WTC11 (cell line): ENCODE measurements at regions of chr19 and their contacts with region 1.

Region 1: DNA sequence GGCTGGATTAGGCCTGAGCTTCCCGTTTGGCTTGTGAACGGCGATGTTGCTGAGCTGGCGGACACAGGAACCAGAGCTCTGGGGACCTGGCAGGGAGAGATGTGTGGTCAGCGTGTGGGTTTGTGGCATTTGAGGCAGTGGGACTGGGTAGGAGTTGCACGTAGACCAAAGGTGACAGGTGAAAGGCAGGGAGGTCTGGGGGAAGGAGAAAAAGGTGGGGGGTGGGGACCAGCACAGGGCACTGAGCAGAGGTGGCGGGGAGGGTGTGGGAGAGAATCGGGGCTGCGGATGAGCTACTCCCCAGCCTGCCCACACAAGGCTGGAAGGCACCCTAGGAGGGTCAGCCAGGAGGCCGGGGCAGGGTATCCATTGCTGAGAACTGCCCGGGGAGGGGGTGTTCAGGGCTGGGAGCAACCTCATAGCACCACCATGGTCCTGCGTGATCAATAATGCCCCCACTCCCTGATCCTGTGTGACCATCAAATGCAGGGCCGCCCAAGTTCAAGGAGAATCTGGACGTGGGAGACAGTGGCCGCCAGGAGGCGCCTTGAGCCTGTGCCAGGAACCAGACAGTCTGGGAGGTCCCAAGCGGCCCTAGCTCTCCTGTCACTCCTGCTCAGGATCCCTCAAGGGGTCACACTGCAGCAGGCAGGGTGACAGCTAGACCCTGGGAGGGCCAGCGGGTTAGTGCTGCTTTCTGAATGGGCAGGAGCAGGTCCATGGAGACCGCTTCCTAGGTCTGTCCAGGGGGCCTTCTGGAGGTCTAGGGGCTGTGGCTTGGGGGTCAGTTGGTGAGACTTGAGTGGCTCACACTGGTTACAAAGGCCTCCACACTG is 12.8 kb upstream of the SELENOW start:
- DNase-seq: peak; percentile 88
- ATAC-seq: peak; percentile 79
- H3K4me3 Mint-ChIP-seq: no peak overlapping the region
- H3K27ac Mint-ChIP-seq: peak overlapping the region; percentile 85
- H3K4me1 Mint-ChIP-seq: peaks cover 22% of the 10 kb centered on the region
- H3K27me3 Mint-ChIP-seq: no peaks in the 10 kb centered on the region
- CTCF ChIP-seq: peak; percentile 80

Region 2: GRCh38 chr19:47398707-47399597 is 366.8 kb before region 1 on chr19:
- CTCF ChIA-PET with region 1: no interaction called
- POLR2A ChIA-PET with region 1: no interaction called
- DNase-seq: peak; percentile 33
- ATAC-seq: peak; percentile 77
- H3K4me3 Mint-ChIP-seq: peak overlapping the region; percentile 13
- H3K27ac Mint-ChIP-seq: peak overlapping the region; percentile 96
- H3K4me1 Mint-ChIP-seq: peaks cover 28% of the 10 kb centered on the region
- H3K27me3 Mint-ChIP-seq: peaks cover under 1% of the 10 kb centered on the region; the same call in 1 of the 2 replicates
- CTCF ChIP-seq: no peak

Region 3: DNA sequence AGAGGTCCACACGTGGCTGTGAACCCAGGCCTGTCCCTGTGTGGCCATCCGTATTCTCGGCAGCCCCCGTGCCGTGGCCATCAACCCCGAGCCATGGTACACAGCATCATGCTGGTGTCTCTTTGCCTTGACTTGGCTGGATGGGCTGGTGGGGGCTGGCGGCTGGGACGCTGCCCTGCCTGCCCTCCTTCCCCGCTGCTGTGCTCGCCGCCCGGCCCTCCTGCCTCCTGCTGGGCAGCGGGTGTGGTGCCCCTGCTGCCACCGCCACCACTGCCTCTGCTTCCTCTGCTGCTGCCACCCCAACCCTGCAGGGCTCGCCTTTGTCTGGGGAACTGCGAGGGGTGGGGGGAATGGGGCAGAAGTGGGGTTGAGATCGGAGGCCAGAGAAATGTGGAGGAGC is 72.2 kb before region 1 on chr19:
- CTCF ChIA-PET with region 1: no interaction called
- POLR2A ChIA-PET with region 1: no interaction called
- DNase-seq: no peak
- ATAC-seq: no peak
- H3K4me3 Mint-ChIP-seq: no peak overlapping the region
- H3K27ac Mint-ChIP-seq: no peak overlapping the region
- H3K4me1 Mint-ChIP-seq: 0 out of 2 replicates have a peak, but pooled peaks cover 2% of the 10 kb centered on the region
- H3K27me3 Mint-ChIP-seq: no peaks in the 10 kb centered on the region
- CTCF ChIP-seq: no peak

Region 4: GRCh38 chr19:47729992-47730889 is 35.5 kb before region 1 on chr19:
- CTCF ChIA-PET with region 1: interaction called, 10 read pairs
- POLR2A ChIA-PET with region 1: no interaction called
- DNase-seq: peak; percentile 95
- ATAC-seq: peak; percentile 94
- H3K4me3 Mint-ChIP-seq: peak overlapping the region; percentile 91
- H3K27ac Mint-ChIP-seq: peak overlapping the region; percentile 74; the same call in 1 of the 2 replicates
- H3K4me1 Mint-ChIP-seq: peaks cover 13% of the 10 kb centered on the region
- H3K27me3 Mint-ChIP-seq: no peaks in the 10 kb centered on the region; the same call in 1 of the 2 replicates
- CTCF ChIP-seq: no peak

Region 5: GRCh38 chr19:47745010-47745901 is 20.5 kb before region 1 on chr19 and contains the start of gene NOP53:
- CTCF ChIA-PET with region 1: interaction called, 20 read pairs
- POLR2A ChIA-PET with region 1: interaction called, 3 read pairs
- DNase-seq: peak; percentile 95
- ATAC-seq: peak; percentile 69
- H3K4me3 Mint-ChIP-seq: peak within 1 kb of the TSS; percentile 97
- H3K27ac Mint-ChIP-seq: peak within 1 kb of the TSS; percentile 97
- H3K4me1 Mint-ChIP-seq: peaks cover 13% of the 10 kb centered on the region
- H3K27me3 Mint-ChIP-seq: no peaks in the 10 kb centered on the region; the same call in 1 of the 2 replicates
- CTCF ChIP-seq: no peak
- total RNA-seq, gene NOP53: 289 to 315 TPM (median 310 TPM) in 3 replicates

Region 6: DNA sequence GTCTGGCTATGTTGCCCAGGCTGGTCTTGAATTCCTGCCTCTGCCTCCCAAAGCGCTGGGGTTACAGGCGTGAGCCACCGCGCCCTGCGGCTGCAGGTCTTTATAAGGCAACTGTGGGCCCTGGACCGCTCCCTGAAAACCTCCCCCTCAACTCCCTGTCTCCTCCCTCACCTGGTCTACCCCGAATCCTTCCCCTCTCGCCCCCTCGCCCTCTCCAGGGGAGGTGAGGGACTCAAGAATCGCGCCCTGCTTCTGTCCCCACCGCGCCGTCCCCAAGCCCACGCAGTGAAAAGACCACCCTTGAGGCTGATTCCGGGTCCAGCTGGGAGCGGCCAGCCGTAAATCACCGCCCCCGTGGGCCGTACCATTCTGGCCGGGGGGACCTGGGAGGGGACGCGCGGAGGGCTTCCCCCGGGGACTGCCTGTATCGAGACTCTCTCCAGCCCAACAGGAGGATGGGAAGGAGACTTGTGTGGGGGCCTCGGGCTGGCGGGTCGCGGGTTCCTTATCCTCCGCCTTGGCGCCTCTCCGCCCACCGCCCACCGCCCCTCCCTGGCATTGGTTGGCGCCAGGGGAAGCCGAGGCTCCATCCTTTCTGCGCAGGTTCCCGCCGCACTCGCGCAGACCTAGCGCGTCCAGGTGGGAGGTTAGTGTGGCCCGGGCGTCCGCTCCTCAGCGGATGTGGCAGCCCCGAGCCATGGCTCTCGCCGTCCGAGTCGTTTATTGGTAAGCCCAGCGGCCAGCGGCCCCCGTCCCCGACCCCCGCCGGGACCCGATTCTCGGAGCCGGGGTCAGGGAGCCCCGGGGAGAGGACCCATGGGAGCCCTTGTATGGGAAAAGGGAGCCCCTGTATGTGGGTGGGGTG is 12.6 kb after region 1 on chr19 and contains the start of gene SELENOW:
- CTCF ChIA-PET with region 1: interaction called, 18 read pairs
- POLR2A ChIA-PET with region 1: interaction called, 8 read pairs
- DNase-seq: peak; percentile 84
- ATAC-seq: peak; percentile 78
- H3K4me3 Mint-ChIP-seq: peak within 1 kb of the TSS; percentile 92
- H3K27ac Mint-ChIP-seq: peak within 1 kb of the TSS; percentile 94
- H3K4me1 Mint-ChIP-seq: peaks cover 36% of the 10 kb centered on the region
- H3K27me3 Mint-ChIP-seq: no peaks in the 10 kb centered on the region
- CTCF ChIP-seq: no peak
- total RNA-seq, gene SELENOW: 391 to 430 TPM (median 422 TPM) in 3 replicates

Region 7: GRCh38 chr19:47790398-47790814 is 24.7 kb after region 1 on chr19:
- CTCF ChIA-PET with region 1: interaction called, 368 read pairs
- POLR2A ChIA-PET with region 1: interaction called, 8 read pairs
- DNase-seq: peak; percentile 100
- ATAC-seq: peak; percentile 91
- H3K4me3 Mint-ChIP-seq: peak overlapping the region; percentile 25; the same call in 1 of the 2 replicates
- H3K27ac Mint-ChIP-seq: peak overlapping the region; percentile 57; the same call in 1 of the 2 replicates
- H3K4me1 Mint-ChIP-seq: peaks cover 10% of the 10 kb centered on the region
- H3K27me3 Mint-ChIP-seq: no peaks in the 10 kb centered on the region
- CTCF ChIP-seq: peak; percentile 85

Region 8: DNA sequence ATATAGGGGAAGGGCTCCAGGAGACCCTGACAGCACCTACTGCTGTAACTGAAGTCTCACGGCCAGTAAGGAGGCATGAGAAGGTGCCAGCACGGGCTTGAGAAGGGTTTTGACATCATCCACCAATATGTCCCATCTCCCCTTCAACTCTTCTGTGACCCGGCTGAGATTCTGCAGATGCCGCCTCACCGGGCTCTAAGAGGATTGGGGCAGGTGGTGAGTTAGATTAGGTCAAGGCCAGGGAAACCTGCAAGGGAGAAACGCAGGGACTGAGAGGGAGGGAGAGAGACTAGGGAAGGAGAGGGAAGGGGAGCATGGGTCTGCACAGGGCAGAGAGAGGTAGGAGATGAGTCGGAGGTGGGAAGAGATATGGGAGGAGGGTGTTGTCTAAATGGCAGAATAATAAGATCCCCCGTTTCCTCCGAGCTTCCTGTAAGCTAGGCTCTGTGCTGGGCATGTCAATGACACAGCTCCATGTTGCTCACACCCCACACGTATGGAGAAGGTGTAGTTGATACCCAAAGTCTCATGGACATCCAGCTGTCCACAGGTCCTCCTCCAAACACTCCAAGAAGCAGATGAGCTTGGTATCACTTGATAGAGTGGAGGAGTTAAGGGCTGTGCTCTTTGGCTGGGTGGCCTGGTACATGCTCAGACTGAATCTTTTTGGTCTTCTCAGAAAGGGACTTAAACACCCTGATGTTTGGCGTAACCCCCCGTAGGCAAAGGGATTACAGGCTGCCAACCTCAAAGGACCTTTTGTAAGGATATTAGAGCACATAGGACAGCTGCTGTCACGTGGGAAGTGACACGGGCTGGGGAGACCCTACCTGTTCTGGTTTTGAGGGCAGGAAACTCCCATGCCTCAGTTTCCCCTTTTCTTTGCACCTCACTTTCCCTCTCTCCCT is 32.5 kb after region 1 on chr19:
- CTCF ChIA-PET with region 1: interaction called, 23 read pairs
- POLR2A ChIA-PET with region 1: no interaction called
- DNase-seq: no peak
- ATAC-seq: no peak
- H3K4me3 Mint-ChIP-seq: no peak overlapping the region
- H3K27ac Mint-ChIP-seq: no peak overlapping the region
- H3K4me1 Mint-ChIP-seq: no peaks in the 10 kb centered on the region
- H3K27me3 Mint-ChIP-seq: no peaks in the 10 kb centered on the region
- CTCF ChIP-seq: no peak

Region 9: DNA sequence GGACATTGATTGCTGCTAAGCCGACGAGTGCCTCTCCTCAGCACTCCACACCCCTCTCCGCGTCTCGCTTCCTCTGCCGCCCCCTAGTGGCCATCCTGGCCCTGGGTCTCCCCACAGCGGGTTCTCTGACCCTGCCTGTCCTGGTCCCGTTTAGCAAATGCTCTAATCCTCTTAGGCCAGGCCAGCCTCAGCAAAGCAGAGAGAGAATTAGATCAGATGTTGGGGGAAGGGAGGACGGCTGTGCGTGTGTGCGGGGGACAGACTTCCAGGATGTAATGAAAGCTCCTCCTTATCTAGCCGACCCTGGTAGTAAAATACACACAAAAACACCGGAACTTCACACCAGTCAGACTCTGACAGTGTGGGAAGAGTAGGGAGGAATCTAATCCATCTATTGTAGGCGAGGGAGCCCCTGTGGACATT is 97.8 kb after region 1 on chr19:
- CTCF ChIA-PET with region 1: interaction called, 12 read pairs
- POLR2A ChIA-PET with region 1: no interaction called
- DNase-seq: peak; percentile 98
- ATAC-seq: peak; percentile 93
- H3K4me3 Mint-ChIP-seq: peak overlapping the region; percentile 45
- H3K27ac Mint-ChIP-seq: peak overlapping the region; percentile 80; the same call in 1 of the 2 replicates
- H3K4me1 Mint-ChIP-seq: peaks cover 21% of the 10 kb centered on the region
- H3K27me3 Mint-ChIP-seq: no peaks in the 10 kb centered on the region
- CTCF ChIP-seq: peak; percentile 97